T-cell (primary cell): ENCODE measurements at regions of chr2 and their contacts with region 1.

Region 1: GRCh38 chr2:27092696-27093429 is 6.3 kb downstream of the KHK start:
- DNase-seq: no peak
- ATAC-seq: no peak
- H3K4me3 ChIP-seq: no peak overlapping the region
- H3K4me3 Mint-ChIP-seq: no peak overlapping the region
- H3K27ac ChIP-seq: no peak overlapping the region
- H3K27ac Mint-ChIP-seq: no peak overlapping the region
- H3K4me1 ChIP-seq: peaks cover 2 to 9% of the 10 kb centered on the region in 2 experiments
- H3K4me1 Mint-ChIP-seq: peaks cover 12 to 29% (median 15%) of the 10 kb centered on the region in 3 donors
- H3K27me3 ChIP-seq: peaks cover 0 to 10% of the 10 kb centered on the region in 2 experiments
- H3K27me3 Mint-ChIP-seq: no peaks in the 10 kb centered on the region

Region 2: DNA sequence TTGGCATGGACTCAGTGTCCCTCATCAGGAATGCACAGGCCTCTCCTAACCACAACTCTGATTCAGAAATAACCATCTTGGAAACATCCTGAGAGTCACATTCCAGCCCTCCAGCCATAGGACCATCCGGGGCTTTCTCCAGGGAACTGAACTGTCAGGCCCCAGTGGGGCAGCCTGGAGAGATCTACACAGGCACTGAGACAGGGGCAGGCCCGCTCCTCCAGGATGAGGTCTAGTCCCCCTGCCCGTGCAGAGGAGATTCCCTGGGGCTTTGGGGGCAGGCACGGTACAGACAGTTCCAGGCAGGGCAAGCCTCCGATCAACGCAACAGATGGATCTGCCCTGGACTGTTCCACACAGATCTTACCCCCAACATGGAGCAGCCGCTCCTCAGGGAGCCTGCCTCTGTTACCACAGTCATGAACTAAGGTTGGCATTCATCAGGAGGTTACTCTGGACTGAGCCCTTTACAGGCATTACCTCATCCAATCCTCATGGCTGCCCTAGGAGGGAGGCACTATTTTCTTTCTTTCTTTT is 388.4 kb before region 1 on chr2:
- CTCF ChIA-PET with region 1: no interaction called
- POLR2A ChIA-PET with region 1: no interaction called
- DNase-seq: no peak
- ATAC-seq: no peak
- H3K4me3 ChIP-seq: no peak overlapping the region
- H3K4me3 Mint-ChIP-seq: no peak overlapping the region
- H3K27ac ChIP-seq: no peak overlapping the region
- H3K27ac Mint-ChIP-seq: no peak overlapping the region
- H3K4me1 ChIP-seq: no peaks in the 10 kb centered on the region
- H3K4me1 Mint-ChIP-seq: no peaks in the 10 kb centered on the region
- H3K27me3 ChIP-seq: peaks cover 0 to 42% of the 10 kb centered on the region in 2 experiments
- H3K27me3 Mint-ChIP-seq: peaks cover 13 to 26% of the 10 kb centered on the region in 2 donors

Region 3: GRCh38 chr2:26982102-26982742 is 110.6 kb before region 1 on chr2:
- CTCF ChIA-PET with region 1: no interaction called
- POLR2A ChIA-PET with region 1: no interaction called
- DNase-seq: peak in 12 of 35 experiments; percentile 2 to 44 (median 14)
- ATAC-seq: peak in 2 of 4 experiments; percentile 57 to 79
- H3K4me3 ChIP-seq: no peak overlapping the region
- H3K4me3 Mint-ChIP-seq: no peak overlapping the region
- H3K27ac ChIP-seq: no peak overlapping the region
- H3K27ac Mint-ChIP-seq: no peak overlapping the region
- H3K4me1 ChIP-seq: no peaks in the 10 kb centered on the region
- H3K4me1 Mint-ChIP-seq: no peaks in the 10 kb centered on the region
- H3K27me3 ChIP-seq: no peaks in the 10 kb centered on the region
- H3K27me3 Mint-ChIP-seq: no peaks in the 10 kb centered on the region

Region 4: GRCh38 chr2:27123302-27124231 is 30.7 kb after region 1 on chr2 and contains the start of gene ABHD1:
- CTCF ChIA-PET with region 1: interaction called, 3 to 11 read pairs
- POLR2A ChIA-PET with region 1: no interaction called
- DNase-seq: peak in 34 of 35 experiments; percentile 10 to 75 (median 44)
- ATAC-seq: peak; percentile 81 to 88 (median 84)
- H3K4me3 ChIP-seq: peak within 1 kb of the TSS; percentile 70 to 72
- H3K4me3 Mint-ChIP-seq: peak within 1 kb of the TSS; percentile 86 to 95 (median 88)
- H3K27ac ChIP-seq: peak within 1 kb of the TSS; percentile 65
- H3K27ac Mint-ChIP-seq: peak within 1 kb of the TSS; percentile 86 to 89
- H3K4me1 ChIP-seq: peaks cover 2 to 20% of the 10 kb centered on the region in 2 experiments
- H3K4me1 Mint-ChIP-seq: peaks cover 10 to 23% (median 18%) of the 10 kb centered on the region in 3 donors
- H3K27me3 ChIP-seq: peaks cover 3 to 16% of the 10 kb centered on the region in 2 experiments
- H3K27me3 Mint-ChIP-seq: peaks cover 13 to 17% of the 10 kb centered on the region in 2 donors
- total RNA-seq, gene ABHD1: 0.66 to 1.4 (median 1.2) TPM